Activated naive CD4-positive, alpha-beta T cell treated with anti-CD3 and anti-CD28 coated beads for 36 hours (primary cell): ENCODE measurements at regions of chr7 and their contacts with region 1.

Region 1: DNA sequence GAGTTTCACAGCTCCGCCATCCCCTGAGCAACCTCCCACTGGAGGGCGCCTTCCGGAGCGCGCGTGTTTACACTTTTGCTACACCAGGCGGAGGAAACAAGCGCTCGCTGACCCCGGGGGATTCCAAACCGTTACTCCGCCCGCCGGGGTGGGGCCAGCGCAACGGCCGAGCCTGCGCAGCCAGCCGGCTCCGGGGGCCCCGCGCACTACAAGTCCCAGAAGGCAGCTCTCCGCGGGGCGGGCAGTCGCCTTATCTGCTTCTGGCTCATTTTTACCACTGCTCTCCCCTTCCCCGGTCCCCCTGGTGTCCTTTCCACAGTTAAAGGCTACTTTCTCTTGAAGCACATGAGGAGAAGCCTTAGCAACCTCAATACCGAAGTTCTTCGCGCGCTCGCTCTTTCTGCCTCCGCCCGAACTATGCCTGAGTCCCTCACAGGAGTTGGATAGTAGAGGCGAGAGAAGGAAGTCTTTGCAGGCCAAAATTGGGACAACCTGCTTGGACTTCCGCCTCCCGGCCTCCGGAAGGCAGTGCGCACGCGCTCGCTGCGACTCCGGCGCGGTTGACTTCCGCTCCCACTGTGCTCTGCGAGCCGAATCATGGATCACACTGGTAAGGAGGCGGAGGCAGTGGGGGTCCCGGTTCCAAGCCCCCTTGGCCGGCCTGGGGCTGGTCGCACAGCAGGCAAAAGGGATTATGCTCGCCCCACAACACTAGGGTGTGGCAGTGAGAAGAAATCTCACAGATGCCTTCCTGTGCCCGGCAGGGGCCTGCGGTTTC is at the start of gene CBLL1:
- DNase-seq: peak; percentile 98
- H3K4me3 Mint-ChIP-seq: peak within 1 kb of the TSS; percentile 96
- H3K27ac Mint-ChIP-seq: peak within 1 kb of the TSS; percentile 100
- H3K4me1 Mint-ChIP-seq: peaks cover 42% of the 10 kb centered on the region
- H3K27me3 Mint-ChIP-seq: no peaks in the 10 kb centered on the region
- total RNA-seq, gene CBLL1: 31.6 to 32.1 TPM

Region 2: GRCh38 chr7:106112117-106112971 is 1631.4 kb before region 1 on chr7 and contains the start of gene SYPL1:
- CTCF ChIA-PET with region 1: no interaction called
- intact Hi-C with region 1: loop called (anchors 5 kb)
- DNase-seq: peak; percentile 94
- H3K4me3 Mint-ChIP-seq: peak within 1 kb of the TSS; percentile 85
- H3K27ac Mint-ChIP-seq: peak within 1 kb of the TSS; percentile 92
- H3K4me1 Mint-ChIP-seq: peaks cover 71% of the 10 kb centered on the region
- H3K27me3 Mint-ChIP-seq: no peaks in the 10 kb centered on the region
- total RNA-seq, gene SYPL1: 24.7 to 26.6 TPM

Region 3: DNA sequence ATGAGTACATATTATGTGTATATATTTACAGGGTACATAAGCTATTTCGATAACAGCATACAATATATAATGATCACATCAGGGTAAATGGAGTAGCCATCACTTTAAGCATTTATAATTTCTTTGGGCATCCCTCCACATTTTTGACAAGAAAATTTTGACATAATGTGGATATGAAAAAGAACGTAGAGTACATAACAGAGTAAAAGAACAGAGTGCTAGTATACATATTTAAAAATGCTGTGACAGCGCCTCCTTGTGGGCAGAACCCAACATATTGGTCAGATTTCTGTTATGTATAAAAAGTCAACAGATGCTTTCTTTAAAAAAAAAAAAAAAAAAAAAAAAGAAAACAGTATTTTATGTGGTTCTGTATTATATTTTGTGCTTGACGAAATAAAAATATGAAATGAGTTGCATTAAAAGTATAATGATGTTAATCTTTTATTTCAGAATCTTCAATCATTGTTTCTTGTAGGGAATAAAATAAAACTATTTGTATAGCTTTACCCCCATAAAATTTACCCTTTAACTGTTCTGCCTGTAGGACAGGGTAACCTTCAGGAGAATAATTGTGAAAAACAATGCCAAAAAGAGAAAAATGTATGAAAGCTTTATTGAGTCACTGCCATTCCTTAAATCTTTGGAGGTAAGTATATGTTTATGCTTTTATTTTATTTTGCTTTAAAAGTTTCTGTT is 593.2 kb before region 1 on chr7:
- CTCF ChIA-PET with region 1: no interaction called
- intact Hi-C with region 1: loop called (anchors 5 kb)
- DNase-seq: peak; percentile 91
- H3K4me3 Mint-ChIP-seq: no peak overlapping the region
- H3K27ac Mint-ChIP-seq: no peak overlapping the region
- H3K4me1 Mint-ChIP-seq: peaks cover 4% of the 10 kb centered on the region
- H3K27me3 Mint-ChIP-seq: no peaks in the 10 kb centered on the region

Region 4: GRCh38 chr7:107579885-107580715 is 163.7 kb before region 1 on chr7 and contains the start of gene BCAP29:
- CTCF ChIA-PET with region 1: no interaction called
- intact Hi-C with region 1: loop called (anchors 1 kb)
- DNase-seq: peak; percentile 64
- H3K4me3 Mint-ChIP-seq: peak within 1 kb of the TSS; percentile 85
- H3K27ac Mint-ChIP-seq: peak within 1 kb of the TSS; percentile 71
- H3K4me1 Mint-ChIP-seq: peaks cover 21% of the 10 kb centered on the region
- H3K27me3 Mint-ChIP-seq: no peaks in the 10 kb centered on the region
- total RNA-seq, gene BCAP29: 18.9 to 21.0 TPM

Region 5: GRCh38 chr7:107890962-107891635 is 147.3 kb after region 1 on chr7 and contains the start of gene DLD:
- CTCF ChIA-PET with region 1: interaction called, 5 read pairs
- intact Hi-C with region 1: loop called (anchors 1 kb)
- DNase-seq: peak; percentile 96
- H3K4me3 Mint-ChIP-seq: peak within 1 kb of the TSS; percentile 100
- H3K27ac Mint-ChIP-seq: peak within 1 kb of the TSS; percentile 98
- H3K4me1 Mint-ChIP-seq: peaks cover 37% of the 10 kb centered on the region
- H3K27me3 Mint-ChIP-seq: no peaks in the 10 kb centered on the region
- total RNA-seq, gene DLD: 92.6 to 96.8 TPM

Region 6: DNA sequence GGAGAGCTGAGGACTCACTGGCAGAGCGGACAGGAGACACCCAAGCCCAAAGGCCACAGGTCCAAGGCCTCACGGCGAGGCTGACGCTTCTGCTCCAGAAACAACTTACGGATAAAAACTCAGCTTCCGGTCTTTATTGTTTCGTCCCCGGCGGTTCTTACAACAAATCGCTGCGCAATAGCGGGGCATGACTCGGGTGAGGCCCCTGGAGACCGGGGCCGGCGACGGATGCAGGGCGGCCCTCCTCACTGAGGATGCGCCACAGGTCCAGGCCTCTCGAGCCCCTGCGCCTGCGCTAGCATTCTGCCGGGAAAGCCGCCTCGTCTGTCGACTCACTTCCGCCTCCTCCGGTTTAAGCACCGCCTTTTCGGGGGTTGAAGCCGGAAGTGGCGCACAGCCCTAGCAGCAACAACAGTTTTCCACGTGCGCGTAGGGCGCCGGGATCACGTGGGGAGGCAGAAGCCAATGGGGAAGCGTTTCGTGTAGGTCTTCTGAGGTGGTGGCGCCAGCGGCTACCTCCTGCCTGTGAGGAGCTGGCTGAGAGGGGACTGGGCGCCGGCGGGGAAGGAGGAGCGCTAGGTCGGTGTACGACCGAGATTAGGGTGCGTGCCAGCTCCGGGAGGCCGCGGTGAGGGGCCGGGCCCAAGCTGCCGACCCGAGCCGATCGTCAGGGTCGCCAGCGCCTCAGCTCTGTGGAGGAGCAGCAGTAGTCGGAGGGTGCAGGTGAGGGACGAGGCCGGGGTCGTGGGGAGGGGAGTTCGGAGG is 825.8 kb after region 1 on chr7 and contains the starts of genes DNAJB9 and THAP5:
- CTCF ChIA-PET with region 1: no interaction called
- intact Hi-C with region 1: loop called (anchors 2 kb)
- DNase-seq: peak; percentile 99
- H3K4me3 Mint-ChIP-seq: peak within 1 kb of the TSS; percentile 98
- H3K27ac Mint-ChIP-seq: peak within 1 kb of the TSS; percentile 99
- H3K4me1 Mint-ChIP-seq: peaks cover 49% of the 10 kb centered on the region
- H3K27me3 Mint-ChIP-seq: no peaks in the 10 kb centered on the region
- total RNA-seq, gene DNAJB9: 8.2 TPM
- total RNA-seq, gene THAP5: 22.7 to 24.8 TPM